Activated CD4-positive, alpha-beta T cell treated with anti-CD3 and anti-CD28 coated beads, Interleukin-2, amount 10 ng/mL, durations not matched to agents 24 days and 14 days (primary cell): ENCODE measurements at regions of chr2 and their contacts with region 1.

Region 1: DNA sequence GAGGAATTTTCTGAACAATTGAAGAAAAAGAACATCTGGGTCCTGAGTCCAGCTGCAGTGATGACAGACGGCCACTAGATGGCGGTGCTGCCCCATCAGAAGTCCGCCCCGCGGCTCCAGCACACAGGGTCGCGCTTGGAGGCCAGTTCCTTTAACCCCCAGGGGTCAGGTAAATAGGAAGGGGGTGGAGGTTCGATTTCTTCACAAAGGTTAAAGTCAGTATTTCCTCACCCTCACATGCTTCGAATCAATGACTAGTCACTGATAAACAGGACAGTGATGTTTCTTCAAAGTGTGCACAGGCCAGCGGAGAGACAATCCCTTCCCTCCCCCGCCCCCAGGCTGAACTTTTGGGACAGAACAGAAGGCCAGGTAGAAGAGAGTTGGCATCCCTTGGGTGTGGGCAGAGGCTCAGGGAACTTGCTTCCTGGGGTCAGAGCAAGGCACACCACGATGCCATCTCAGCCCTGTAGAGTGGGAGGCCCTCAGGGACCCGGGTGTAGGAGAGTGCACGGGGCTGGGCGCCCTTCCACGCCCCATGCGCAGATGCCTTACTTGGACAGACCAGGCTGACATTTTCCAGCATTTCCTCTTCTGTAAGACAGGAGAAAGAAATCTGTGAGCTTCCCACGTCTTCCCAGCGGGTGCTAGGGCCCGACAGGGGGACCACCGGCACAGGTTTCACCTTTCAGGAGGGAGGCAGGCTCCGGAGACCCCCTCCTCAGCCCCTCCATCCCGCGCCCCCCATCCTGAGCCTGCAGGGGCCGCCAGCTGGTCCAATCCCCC is 722 bp downstream of the APOB start:
- DNase-seq: peak; percentile 83
- H3K4me3 Mint-ChIP-seq: no peak overlapping the region
- H3K27ac Mint-ChIP-seq: no peak overlapping the region
- H3K4me1 Mint-ChIP-seq: peaks cover 4% of the 10 kb centered on the region
- H3K27me3 Mint-ChIP-seq: peaks cover 11% of the 10 kb centered on the region

Region 2: DNA sequence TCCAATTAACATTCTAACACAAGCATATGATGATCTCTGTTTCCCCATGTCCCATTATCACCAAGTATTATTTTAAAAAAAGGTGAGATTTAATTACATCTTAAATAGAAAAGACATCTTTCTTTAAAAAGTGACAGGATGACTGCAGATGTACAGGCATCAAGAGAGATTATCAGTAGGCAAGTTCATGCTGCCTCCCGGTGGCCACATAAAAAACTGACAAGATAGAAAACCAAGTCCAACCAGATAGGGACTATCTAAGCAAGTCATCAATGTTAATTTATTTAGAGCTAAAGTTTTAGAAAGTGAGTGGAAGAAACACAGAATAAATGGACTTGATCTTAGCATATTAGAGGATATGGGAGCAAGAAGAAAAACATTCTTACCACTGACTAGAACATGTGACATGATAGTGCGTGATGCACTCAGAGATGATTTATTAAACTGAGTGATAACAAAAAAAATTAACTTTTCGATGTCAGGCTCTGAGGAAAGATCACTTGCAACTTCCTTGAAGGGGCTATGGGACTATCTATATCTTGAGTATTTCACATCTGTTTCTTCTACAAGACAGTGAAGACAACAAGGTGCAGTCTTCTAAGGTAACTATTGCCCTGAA is 75.3 kb after region 1 on chr2:
- intact Hi-C with region 1: loop called (anchors 1 kb)
- DNase-seq: peak; percentile 59
- H3K4me3 Mint-ChIP-seq: no peak overlapping the region
- H3K27ac Mint-ChIP-seq: no peak overlapping the region
- H3K4me1 Mint-ChIP-seq: no peaks in the 10 kb centered on the region
- H3K27me3 Mint-ChIP-seq: peaks cover 2% of the 10 kb centered on the region

Region 3: GRCh38 chr2:21317131-21317530 is 274.0 kb after region 1 on chr2:
- intact Hi-C with region 1: loop called (anchors 1 kb)
- DNase-seq: peak; percentile 76
- H3K4me3 Mint-ChIP-seq: no peak overlapping the region
- H3K27ac Mint-ChIP-seq: no peak overlapping the region
- H3K4me1 Mint-ChIP-seq: no peaks in the 10 kb centered on the region
- H3K27me3 Mint-ChIP-seq: no peaks in the 10 kb centered on the region